ENCODE measurements at regions of chr17 and their contacts with region 1.

Region 1: GRCh38 chr17:75109407-75110233 is at the start of gene ARMC7:
- DNase-seq: peak; percentile 77 to 95 (median 91)
- ATAC-seq: peak; percentile 83
- H3K4me3 ChIP-seq: peak within 1 kb of the TSS; percentile 90 to 91
- H3K4me3 Mint-ChIP-seq: peak within 1 kb of the TSS; percentile 87
- H3K27ac ChIP-seq: peak within 1 kb of the TSS; percentile 42 to 75
- H3K27ac Mint-ChIP-seq: peak within 1 kb of the TSS; percentile 92
- H3K4me1 ChIP-seq: peaks cover 34% of the 10 kb centered on the region
- H3K4me1 Mint-ChIP-seq: peaks cover 33% of the 10 kb centered on the region
- H3K27me3 ChIP-seq: no peaks in the 10 kb centered on the region
- H3K27me3 Mint-ChIP-seq: no peaks in the 10 kb centered on the region
- CTCF ChIP-seq: no peak
- total RNA-seq, gene ARMC7: 2.0 to 3.0 TPM

Region 2: GRCh38 chr17:75012346-75013091 is 97.1 kb before region 1 on chr17 and contains the start of gene MRPL58:
- CTCF ChIA-PET with region 1: interaction called, 13 read pairs
- POLR2A ChIA-PET with region 1: interaction called, 3 read pairs
- intact Hi-C with region 1: loop called in 1 of 2 experiments (anchors 1 kb)
- DNase-seq: peak; percentile 59 to 90 (median 79)
- ATAC-seq: peak; percentile 92
- H3K4me3 ChIP-seq: peak within 1 kb of the TSS; percentile 82 to 85
- H3K4me3 Mint-ChIP-seq: peak within 1 kb of the TSS; percentile 93
- H3K27ac ChIP-seq: peak within 1 kb of the TSS; percentile 77 to 79
- H3K27ac Mint-ChIP-seq: peak within 1 kb of the TSS; percentile 94
- H3K4me1 ChIP-seq: peaks cover 15% of the 10 kb centered on the region
- H3K4me1 Mint-ChIP-seq: peaks cover 33% of the 10 kb centered on the region
- H3K27me3 ChIP-seq: no peaks in the 10 kb centered on the region
- H3K27me3 Mint-ChIP-seq: no peaks in the 10 kb centered on the region
- CTCF ChIP-seq: peak; percentile 59
- total RNA-seq, gene MRPL58: 9.2 to 11.2 TPM

Region 3: GRCh38 chr17:75087558-75088453 is 21.8 kb before region 1 on chr17 and contains the start of gene SLC16A5:
- CTCF ChIA-PET with region 1: interaction called, 8 read pairs
- POLR2A ChIA-PET with region 1: interaction called, 5 read pairs
- intact Hi-C with region 1: loop called in 1 of 2 experiments (anchors 2 kb)
- DNase-seq: peak in 8 of 9 experiments; percentile 31 to 75 (median 50)
- ATAC-seq: peak; percentile 69
- H3K4me3 ChIP-seq: peak within 1 kb of the TSS; percentile 49 to 50
- H3K4me3 Mint-ChIP-seq: peak within 1 kb of the TSS; percentile 83
- H3K27ac ChIP-seq: peak within 1 kb of the TSS; percentile 26 to 27
- H3K27ac Mint-ChIP-seq: peak within 1 kb of the TSS; percentile 45
- H3K4me1 ChIP-seq: peaks cover 38% of the 10 kb centered on the region
- H3K4me1 Mint-ChIP-seq: peaks cover 40% of the 10 kb centered on the region
- H3K27me3 ChIP-seq: no peaks in the 10 kb centered on the region
- H3K27me3 Mint-ChIP-seq: no peaks in the 10 kb centered on the region
- CTCF ChIP-seq: no peak
- total RNA-seq, gene SLC16A5: 2.9 to 3.6 TPM

Region 4: DNA sequence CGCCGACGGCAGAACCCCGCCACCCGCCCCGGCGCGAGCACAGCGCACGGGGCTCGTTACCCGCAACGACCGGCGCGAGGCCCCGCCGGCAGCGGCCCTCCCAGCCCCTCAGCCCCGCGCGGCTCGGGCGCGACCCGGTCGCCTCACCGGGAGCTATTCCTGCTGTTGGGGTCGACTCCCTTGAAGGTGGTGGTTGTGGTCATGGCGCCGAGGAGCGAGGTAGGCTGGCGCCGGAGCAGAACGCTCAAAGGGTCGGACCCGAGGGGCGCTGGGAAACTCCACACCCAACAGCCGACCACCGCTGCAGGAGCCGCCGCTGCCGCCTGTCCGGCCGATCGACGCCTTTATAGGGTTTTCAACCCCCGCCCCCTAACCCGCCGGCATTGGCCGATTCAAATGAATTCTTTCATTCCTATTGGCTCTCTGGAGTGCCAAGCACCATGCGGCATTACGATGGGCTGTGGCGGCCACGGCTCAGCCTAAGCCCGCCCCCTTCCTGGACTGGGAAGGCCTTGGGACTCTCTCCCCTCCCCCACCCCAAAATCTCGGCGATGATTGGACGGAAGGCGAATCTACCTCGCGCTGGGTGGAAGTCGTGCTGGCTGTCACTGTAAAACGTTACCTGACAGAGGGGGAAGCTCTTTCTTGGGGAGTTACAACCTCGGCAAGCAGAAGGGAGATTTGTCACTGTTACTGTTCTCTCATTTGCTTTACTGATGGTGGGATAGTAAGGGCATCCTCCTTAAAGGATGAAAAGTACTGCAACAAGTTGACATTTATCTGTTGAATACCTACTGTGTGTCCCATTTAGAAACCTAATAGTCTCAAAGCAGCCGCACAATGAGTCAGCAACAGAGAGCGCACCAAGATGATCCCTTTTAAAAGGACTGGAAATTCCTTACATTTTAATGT is 44.8 kb after region 1 on chr17 and contains the start of gene JPT1:
- CTCF ChIA-PET with region 1: interaction called, 16 read pairs
- POLR2A ChIA-PET with region 1: interaction called, 5 read pairs
- intact Hi-C with region 1: loop called in 1 of 2 experiments (anchors 1 kb)
- DNase-seq: peak; percentile 94 to 99 (median 97)
- ATAC-seq: peak; percentile 97
- H3K4me3 ChIP-seq: peak within 1 kb of the TSS; percentile 88 to 94
- H3K4me3 Mint-ChIP-seq: peak within 1 kb of the TSS; percentile 91
- H3K27ac ChIP-seq: peak within 1 kb of the TSS; percentile 78 to 81
- H3K27ac Mint-ChIP-seq: peak within 1 kb of the TSS; percentile 87
- H3K4me1 ChIP-seq: peaks cover 23% of the 10 kb centered on the region
- H3K4me1 Mint-ChIP-seq: peaks cover 31% of the 10 kb centered on the region
- H3K27me3 ChIP-seq: no peaks in the 10 kb centered on the region
- H3K27me3 Mint-ChIP-seq: no peaks in the 10 kb centered on the region
- CTCF ChIP-seq: no peak
- total RNA-seq, gene JPT1: 15.1 to 17.3 TPM

Region 5: GRCh38 chr17:75228305-75228704 is 118.7 kb after region 1 on chr17:
- CTCF ChIA-PET with region 1: interaction called, 15 read pairs
- POLR2A ChIA-PET with region 1: no interaction called
- intact Hi-C with region 1: no loop called
- DNase-seq: no peak
- ATAC-seq: no peak
- H3K4me3 ChIP-seq: no peak overlapping the region
- H3K4me3 Mint-ChIP-seq: no peak overlapping the region
- H3K27ac ChIP-seq: no peak overlapping the region
- H3K27ac Mint-ChIP-seq: no peak overlapping the region
- H3K4me1 ChIP-seq: no peaks in the 10 kb centered on the region
- H3K4me1 Mint-ChIP-seq: no peaks in the 10 kb centered on the region
- H3K27me3 ChIP-seq: no peaks in the 10 kb centered on the region
- H3K27me3 Mint-ChIP-seq: no peaks in the 10 kb centered on the region
- CTCF ChIP-seq: no peak

Region 6: DNA sequence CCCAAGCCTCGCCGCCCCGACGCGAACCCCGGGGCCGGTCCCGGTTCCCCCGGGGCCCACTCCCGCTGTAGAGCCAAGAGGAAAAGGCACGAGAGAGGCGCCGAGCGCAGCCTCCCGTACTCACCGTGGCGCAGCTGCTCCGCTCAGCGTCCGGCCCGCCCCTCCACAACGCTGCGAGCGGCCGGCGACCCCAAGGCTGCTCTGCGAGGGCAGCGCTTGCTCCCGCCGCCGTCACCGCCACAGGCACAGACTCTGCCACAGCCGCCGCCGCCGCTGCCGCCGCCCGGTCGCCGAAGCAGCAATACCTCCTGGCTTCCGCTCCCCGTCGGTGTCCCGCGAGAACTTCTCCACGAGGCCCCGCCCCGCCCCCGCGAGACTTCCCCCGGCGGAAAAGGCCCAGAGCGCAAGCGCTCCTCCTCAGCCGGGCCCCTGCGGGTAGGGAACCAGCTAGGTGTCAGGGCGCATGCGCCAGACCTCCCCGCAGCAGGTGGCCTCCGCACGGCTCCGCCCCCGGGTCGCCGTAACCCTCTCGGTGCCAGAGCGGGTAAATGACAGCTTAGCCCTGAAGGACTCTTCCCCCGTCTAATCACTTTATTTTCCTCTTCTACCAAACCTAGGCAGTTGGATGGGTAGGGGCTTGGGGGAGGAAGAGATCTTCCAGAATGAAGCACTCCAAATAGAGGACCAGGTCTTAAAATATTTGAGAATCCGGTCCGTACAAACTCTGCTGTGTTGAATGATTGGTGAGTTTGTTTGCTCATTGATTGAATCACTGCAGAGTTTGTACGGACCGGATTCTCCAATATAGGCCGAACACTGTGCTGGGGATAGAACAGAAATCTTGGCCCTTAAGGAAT is 296.0 kb after region 1 on chr17 and contains the start of gene GRB2:
- CTCF ChIA-PET with region 1: no interaction called
- POLR2A ChIA-PET with region 1: no interaction called
- intact Hi-C with region 1: loop called in 1 of 2 experiments (anchors 1 kb)
- DNase-seq: peak; percentile 99 to 100 (median 99)
- ATAC-seq: peak; percentile 83
- H3K4me3 ChIP-seq: peak within 1 kb of the TSS; percentile 58 to 100
- H3K4me3 Mint-ChIP-seq: peak within 1 kb of the TSS; percentile 98
- H3K27ac ChIP-seq: peak within 1 kb of the TSS; percentile 77 to 86
- H3K27ac Mint-ChIP-seq: peak within 1 kb of the TSS; percentile 95
- H3K4me1 ChIP-seq: peaks cover 37% of the 10 kb centered on the region
- H3K4me1 Mint-ChIP-seq: peaks cover 47% of the 10 kb centered on the region
- H3K27me3 ChIP-seq: no peaks in the 10 kb centered on the region
- H3K27me3 Mint-ChIP-seq: no peaks in the 10 kb centered on the region
- CTCF ChIP-seq: no peak
- total RNA-seq, gene GRB2: 96.2 to 99.4 TPM

Measured in CD8-positive, alpha-beta T cell (primary cell).